ENCODE measurements at regions of chr19 and their contacts with region 1.

Region 1: DNA sequence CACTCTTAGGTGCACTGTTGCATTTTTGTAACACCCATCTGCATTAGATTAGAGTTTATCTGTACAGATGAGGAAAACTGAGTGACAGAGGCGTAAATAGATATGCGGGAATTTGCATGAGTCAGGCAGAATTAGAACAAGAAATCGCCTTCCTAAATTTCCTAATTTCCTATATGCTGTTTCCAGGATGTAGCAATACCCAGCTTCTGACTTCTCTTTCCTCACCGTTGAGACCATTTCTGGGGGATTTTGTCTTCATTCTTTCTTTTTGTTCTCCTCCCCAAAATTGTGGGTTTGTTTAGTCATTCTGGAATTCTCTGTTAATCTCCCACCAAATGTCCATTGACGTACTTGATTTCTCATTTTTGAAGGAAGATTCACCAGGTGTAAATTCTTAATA is 10.6 kb upstream of the ZNF792 start:
- DNase-seq: no peak
- ATAC-seq: no peak
- H3K4me3 ChIP-seq: no peak overlapping the region
- H3K27ac ChIP-seq: no peak overlapping the region
- H3K4me1 ChIP-seq: no peaks in the 10 kb centered on the region
- H3K27me3 ChIP-seq: no peaks in the 10 kb centered on the region
- CTCF ChIP-seq: no peak

Region 2: GRCh38 chr19:35006342-35007018 is 31.8 kb after region 1 on chr19:
- CTCF ChIA-PET with region 1: no interaction called
- POLR2A ChIA-PET with region 1: no interaction called
- intact Hi-C with region 1: loop called (anchors 2 kb)
- DNase-seq: peak; percentile 93
- ATAC-seq: peak; percentile 96
- H3K4me3 ChIP-seq: peak overlapping the region; percentile 30; the same call in 1 of the 2 replicates
- H3K27ac ChIP-seq: peak overlapping the region; percentile 77
- H3K4me1 ChIP-seq: peaks cover 21% of the 10 kb centered on the region
- H3K27me3 ChIP-seq: no peaks in the 10 kb centered on the region
- CTCF ChIP-seq: no peak

Region 3: DNA sequence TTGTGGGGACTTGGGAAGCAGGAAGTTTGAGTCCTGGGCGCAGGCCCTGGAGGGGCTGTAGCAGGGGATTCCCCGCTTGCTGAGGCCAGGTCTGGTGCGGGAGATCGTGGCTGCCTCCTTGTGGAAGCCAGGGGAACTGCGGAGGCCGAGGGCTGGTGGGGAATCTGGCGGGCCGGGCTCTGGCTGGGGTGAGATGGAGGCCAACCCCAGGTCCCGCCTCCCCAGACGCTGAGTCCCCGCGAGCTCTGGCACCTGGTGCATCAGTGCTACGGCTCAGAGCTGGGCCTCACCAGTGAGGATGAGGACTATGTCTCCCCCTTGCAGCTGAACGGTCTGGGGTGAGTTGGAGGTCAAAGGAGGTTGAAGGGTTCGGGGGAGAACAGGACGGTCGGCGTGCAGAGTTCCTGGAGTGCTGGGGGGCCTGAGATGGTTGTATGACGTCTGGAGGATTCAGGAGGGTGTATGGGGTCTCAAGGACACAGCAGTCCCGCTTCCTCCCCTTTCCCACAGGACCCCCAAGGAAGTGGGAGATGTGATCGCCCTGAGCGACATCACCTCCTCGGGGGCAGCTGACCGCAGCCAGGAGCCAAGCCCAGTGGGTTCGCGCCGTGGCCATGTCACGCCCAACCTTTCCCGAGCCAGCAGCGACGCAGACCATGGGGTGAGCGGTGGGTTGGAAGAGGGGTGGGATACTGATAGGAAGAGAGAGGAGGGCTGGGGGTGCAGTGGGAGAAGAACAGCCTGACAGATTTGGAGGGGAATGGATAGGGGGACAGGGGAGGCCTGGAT is 38.6 kb after region 1 on chr19:
- CTCF ChIA-PET with region 1: interaction called, 3 read pairs
- POLR2A ChIA-PET with region 1: no interaction called
- intact Hi-C with region 1: loop called (anchors 1 kb)
- DNase-seq: peak; percentile 36
- ATAC-seq: peak; percentile 57
- H3K4me3 ChIP-seq: no peak overlapping the region
- H3K27ac ChIP-seq: no peak overlapping the region
- H3K4me1 ChIP-seq: no peaks in the 10 kb centered on the region
- H3K27me3 ChIP-seq: no peaks in the 10 kb centered on the region
- CTCF ChIP-seq: peak; percentile 75

Region 4: DNA sequence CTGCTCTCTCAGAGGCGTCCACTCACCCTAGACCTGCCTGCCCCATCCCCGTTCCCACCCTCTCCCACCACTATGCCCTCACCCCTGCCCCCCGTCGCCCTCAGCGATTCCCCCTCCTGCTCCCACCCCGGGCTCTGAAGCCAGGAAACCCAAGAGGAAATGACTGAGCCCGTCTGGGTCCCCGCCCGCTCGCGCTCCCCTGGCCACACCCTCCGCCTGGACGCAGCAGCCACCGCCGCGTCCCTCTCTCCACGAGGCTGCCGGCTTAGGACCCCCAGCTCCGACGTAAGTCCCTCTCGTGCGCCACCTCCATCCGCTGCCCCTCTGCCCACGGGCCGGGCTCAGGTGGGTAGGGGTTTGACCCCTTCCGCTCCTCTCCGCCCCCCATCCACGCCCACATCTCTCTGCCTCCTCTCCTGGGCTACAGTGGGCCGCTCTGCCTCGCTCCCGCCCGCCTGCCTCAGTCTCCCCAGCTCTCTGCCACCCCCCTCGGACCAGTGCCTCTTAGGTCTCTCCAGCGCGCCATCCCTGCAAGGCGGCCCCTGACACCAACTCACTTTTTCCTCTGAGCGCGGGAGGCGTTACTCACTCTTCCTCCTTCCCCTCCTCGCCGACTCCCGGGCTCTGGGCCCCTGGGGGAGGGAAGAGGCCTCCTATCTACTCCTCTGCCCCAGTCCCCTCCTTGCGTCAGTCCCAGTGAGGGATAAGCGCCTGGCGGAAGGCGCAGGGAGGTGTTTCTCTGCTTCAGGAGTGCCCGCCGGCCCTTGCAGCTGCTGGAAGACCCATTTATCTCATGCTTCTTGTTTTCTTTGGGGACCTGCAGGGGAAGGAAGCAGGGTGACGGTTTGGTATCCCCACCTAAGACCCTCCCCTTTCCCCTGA is 180.1 kb after region 1 on chr19 and contains the start of gene FXYD5:
- CTCF ChIA-PET with region 1: no interaction called
- POLR2A ChIA-PET with region 1: interaction called, 26 read pairs
- intact Hi-C with region 1: no loop called
- DNase-seq: peak; percentile 70
- ATAC-seq: peak; percentile 85
- H3K4me3 ChIP-seq: peak within 1 kb of the TSS; percentile 75
- H3K27ac ChIP-seq: peak within 1 kb of the TSS; percentile 62
- H3K4me1 ChIP-seq: peaks cover 14% of the 10 kb centered on the region
- H3K27me3 ChIP-seq: no peaks in the 10 kb centered on the region
- CTCF ChIP-seq: no peak
- total RNA-seq, gene FXYD5: 114 and 123 TPM in 2 replicates

Measured in PC-3 (cell line).